Motor neuron (in vitro differentiated cells): ENCODE measurements at regions of chr10 and their contacts with region 1.

Region 1: GRCh38 chr10:11515596-11516430 is 95.6 kb downstream of the USP6NL start:
- ATAC-seq: peak in 4 of 8 experiments; percentile 74 to 91 (median 84)
- H3K4me3 ChIP-seq: no peak overlapping the region
- H3K27ac ChIP-seq: no peak overlapping the region
- H3K4me1 ChIP-seq: peaks cover 0 to 6% of the 10 kb centered on the region in 2 donors

Region 2: GRCh38 chr10:11724938-11725776 is 209.3 kb after region 1 on chr10:
- in situ Hi-C with region 1: loop called in 3 of 9 experiments (anchors 10 to 25 kb)
- ATAC-seq: peak in 4 of 8 experiments; percentile 61 to 92 (median 84)
- H3K4me3 ChIP-seq: no peak overlapping the region
- H3K27ac ChIP-seq: no peak overlapping the region
- H3K4me1 ChIP-seq: no peaks in the 10 kb centered on the region

Region 3: GRCh38 chr10:11757821-11758463 is 242.1 kb after region 1 on chr10:
- in situ Hi-C with region 1: loop called in 5 of 9 experiments (anchors 10 to 25 kb)
- ATAC-seq: peak; percentile 94 to 99 (median 97)
- H3K4me3 ChIP-seq: no peak overlapping the region
- H3K27ac ChIP-seq: peak overlapping the region in 1 of 2 donors; percentile 52
- H3K4me1 ChIP-seq: peaks cover 3 to 10% of the 10 kb centered on the region in 2 donors

Region 4: DNA sequence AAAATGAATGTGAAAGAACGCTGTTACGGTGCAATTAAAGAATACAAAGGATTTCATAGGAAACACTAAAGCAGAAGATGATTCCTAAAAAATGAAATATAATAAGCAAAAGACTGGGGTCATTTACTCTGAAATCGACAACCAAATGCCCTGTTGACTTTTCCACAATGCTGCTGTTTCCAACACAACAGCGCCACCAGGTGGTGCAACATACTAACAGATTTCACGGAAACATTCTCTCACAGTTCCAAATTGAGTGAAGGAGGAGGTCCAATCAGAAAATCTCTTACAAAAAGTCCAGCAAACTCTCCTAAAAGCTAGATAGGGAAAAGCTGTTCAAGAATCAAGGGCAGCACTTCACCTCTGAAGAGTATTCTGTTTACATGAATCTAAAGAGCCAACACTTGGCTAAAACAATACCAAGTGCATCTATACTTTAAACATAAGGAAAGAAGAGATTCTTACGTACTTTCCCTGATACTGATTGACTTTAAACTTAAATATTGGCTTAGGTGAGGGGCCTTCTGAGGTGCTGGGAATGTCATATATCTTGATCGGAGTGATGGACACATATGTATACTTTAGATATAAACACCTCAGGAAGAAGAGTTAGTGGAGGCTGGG is 470.9 kb after region 1 on chr10:
- in situ Hi-C with region 1: loop called in 1 of 9 experiments (anchors 10 kb)
- ATAC-seq: peak; percentile 26 to 85 (median 56)
- H3K4me3 ChIP-seq: no peak overlapping the region
- H3K27ac ChIP-seq: no peak overlapping the region
- H3K4me1 ChIP-seq: no peaks in the 10 kb centered on the region

Region 5: GRCh38 chr10:12135631-12136030 is 619.8 kb after region 1 on chr10:
- in situ Hi-C with region 1: no loop called
- ATAC-seq: no peak
- H3K4me3 ChIP-seq: no peak overlapping the region
- H3K27ac ChIP-seq: no peak overlapping the region
- H3K4me1 ChIP-seq: peaks cover 3 to 4% of the 10 kb centered on the region in 2 donors